HAP-1 (cell line): ENCODE measurements at regions of chr10 and their contacts with region 1.

Region 1: GRCh38 chr10:91908337-91909116 is 759 bp downstream of the FGFBP3 start:
- DNase-seq: peak; percentile 80 to 89
- H3K4me3 ChIP-seq: peak overlapping the region; percentile 54
- H3K4me1 ChIP-seq: peaks cover 9% of the 10 kb centered on the region
- H3K27me3 ChIP-seq: no peaks in the 10 kb centered on the region

Region 2: DNA sequence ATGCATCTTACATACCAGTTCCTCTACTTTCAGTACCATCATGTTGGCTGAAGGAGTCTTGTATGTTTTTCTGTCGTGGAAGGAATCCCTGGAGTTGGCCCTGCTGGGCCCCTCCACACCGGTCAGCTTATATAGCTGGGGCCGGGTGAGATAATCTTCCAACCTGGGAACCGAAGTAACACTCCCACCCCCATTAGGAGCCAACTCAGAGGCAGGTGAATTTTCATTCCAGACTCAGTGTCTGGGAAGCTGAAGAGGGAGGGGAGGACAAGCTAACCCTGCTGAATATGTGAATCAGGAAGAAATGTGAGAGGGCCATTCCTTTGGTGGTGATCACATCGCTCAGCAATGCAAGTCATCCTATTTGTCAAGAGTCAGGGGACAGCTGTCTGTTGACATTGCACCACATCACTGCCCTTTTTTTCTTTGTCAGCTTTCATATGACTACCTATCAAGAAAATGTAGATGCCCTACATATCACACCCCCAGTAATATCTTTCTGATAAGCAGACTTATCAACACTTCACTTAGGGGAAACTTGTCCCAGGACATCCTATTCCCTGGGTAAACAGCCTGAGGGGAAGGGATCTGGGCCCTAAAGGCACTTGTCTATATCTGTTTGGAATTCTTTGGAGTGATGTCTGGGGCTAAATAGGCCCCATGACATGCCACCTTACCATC is 987.4 kb before region 1 on chr10 and contains the start of gene ANKRD1:
- in situ Hi-C with region 1: loop called (anchors 25 kb)
- DNase-seq: no peak
- H3K4me3 ChIP-seq: no peak within 1 kb of the TSS
- H3K4me1 ChIP-seq: peaks cover 14% of the 10 kb centered on the region
- H3K27me3 ChIP-seq: no peaks in the 10 kb centered on the region

Region 3: DNA sequence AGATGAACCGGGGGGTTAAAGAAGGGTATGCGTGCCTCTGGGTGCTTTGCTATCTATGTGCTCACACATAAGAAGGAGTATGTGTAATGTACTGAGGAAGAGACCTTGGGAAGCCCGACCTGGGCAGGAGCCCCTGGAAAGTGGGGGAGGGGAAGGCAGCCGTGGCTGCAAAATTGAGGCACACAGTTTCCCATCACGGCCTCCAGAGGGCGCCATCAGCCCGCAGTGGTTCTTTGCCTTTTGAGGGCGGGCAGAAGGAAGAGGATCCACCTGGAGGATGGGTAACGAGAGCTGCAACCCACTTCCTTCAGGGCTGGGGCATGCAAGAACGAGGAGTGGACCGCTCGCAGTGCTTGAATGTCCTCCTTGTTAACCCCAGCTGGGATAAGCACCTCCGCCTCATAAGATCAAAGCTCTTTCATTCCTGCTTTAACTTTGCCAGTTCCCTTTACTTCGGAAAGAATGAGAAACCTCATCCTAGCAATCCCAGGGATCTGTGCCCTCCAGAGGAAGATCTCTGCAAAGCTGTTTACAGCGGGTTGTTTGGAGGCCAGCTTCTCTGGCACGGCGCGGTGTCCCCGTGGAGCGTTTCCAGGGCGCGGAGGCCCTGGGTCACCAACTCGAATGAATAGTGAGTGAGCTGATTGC is 610.2 kb before region 1 on chr10:
- in situ Hi-C with region 1: loop called (anchors 25 kb)
- DNase-seq: peak; percentile 69 to 87
- H3K4me3 ChIP-seq: peak overlapping the region; percentile 13; the same call in 1 of the 2 replicates
- H3K4me1 ChIP-seq: peaks cover 19% of the 10 kb centered on the region
- H3K27me3 ChIP-seq: no peaks in the 10 kb centered on the region

Region 4: GRCh38 chr10:91389636-91390512 is 518.7 kb before region 1 on chr10:
- in situ Hi-C with region 1: loop called (anchors 25 kb)
- DNase-seq: peak in 1 of 2 experiments; percentile 52
- H3K4me3 ChIP-seq: no peak overlapping the region
- H3K4me1 ChIP-seq: no peaks in the 10 kb centered on the region
- H3K27me3 ChIP-seq: peaks cover 29% of the 10 kb centered on the region